RWPE1 (cell line): ENCODE measurements at regions of chr3 and their contacts with region 1.

Region 1: GRCh38 chr3:51371943-51372557 is 13.0 kb upstream of the MANF start:
- DNase-seq: no peak
- H3K27ac ChIP-seq: no peak overlapping the region
- CTCF ChIP-seq: peak; percentile 73

Region 2: DNA sequence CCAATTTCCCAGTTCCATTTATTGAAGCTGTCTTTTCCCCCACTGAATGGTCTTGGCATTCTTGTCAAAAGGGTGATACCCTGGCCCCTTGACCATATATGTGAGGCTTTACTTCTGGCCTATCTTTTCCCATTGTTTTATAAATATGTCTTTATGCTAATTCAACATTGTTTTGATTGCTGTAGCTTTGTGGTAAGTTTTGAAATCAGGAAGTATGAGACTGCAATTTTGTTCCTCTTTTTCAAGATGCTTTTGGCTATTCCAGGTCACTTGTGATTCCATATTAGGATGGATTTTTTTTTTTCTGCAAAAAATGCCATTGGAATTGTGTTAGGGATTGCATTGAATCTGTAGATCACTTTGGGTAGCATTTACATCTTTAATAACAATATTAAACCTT is 128.1 kb before region 1 on chr3:
- CTCF ChIA-PET with region 1: interaction called, 14 read pairs
- POLR2A ChIA-PET with region 1: no interaction called
- DNase-seq: no peak
- H3K27ac ChIP-seq: no peak overlapping the region
- CTCF ChIP-seq: no peak

Region 3: GRCh38 chr3:51269466-51269865 is 102.6 kb before region 1 on chr3:
- CTCF ChIA-PET with region 1: interaction called, 10 read pairs
- POLR2A ChIA-PET with region 1: no interaction called
- DNase-seq: no peak
- H3K27ac ChIP-seq: no peak overlapping the region
- CTCF ChIP-seq: no peak

Region 4: GRCh38 chr3:51937014-51937413 is 565.0 kb after region 1 on chr3:
- CTCF ChIA-PET with region 1: no interaction called
- POLR2A ChIA-PET with region 1: no interaction called
- DNase-seq: no peak
- H3K27ac ChIP-seq: peak overlapping the region; percentile 22
- CTCF ChIP-seq: no peak